ENCODE measurements at regions of chr10 and their contacts with region 1.

Region 1: DNA sequence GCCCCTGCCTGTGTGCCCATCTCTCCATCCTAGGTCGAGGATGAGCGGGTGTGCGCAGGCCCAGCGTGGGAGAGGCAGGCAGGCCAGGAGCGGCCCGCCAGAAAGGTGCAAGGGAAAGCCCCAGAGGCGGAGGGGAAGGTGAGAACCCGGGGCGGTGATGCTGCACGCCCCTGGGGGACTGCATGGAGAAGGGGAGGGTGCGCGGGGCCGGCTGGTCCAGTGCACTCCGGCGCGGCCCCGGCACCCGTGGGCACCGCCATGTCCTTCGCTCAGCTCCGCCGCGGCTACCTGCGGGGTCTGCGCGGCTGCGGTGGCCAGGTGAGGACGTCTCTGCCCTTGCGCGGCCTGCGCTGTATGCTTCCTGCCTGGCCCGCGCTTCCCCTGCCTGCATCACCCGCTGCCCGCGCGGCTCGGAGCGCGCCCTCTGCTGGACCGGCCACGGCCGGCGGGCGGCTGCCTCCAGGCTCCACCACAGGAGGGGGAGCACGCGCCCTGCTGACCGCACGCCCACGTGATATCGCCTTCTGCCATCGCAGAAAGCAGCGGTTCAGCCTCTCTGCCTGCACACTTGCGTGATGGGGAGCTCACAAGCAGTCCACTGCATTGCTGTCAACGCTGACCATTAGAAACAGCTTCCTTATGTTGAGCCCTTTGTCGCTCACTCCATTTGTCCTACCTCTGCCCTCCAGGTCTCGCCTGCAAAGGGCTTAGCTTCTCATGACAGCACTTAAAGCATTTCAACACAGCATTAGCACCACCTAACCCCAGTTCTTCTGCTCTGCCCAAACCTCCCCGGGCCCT is 73.9 kb downstream of the CXCL12 start:
- DNase-seq: peak; percentile 80 to 88
- ATAC-seq: peak; percentile 73 to 83
- H3K4me3 ChIP-seq: peak overlapping the region; percentile 27 to 62 (median 36)
- H3K27ac ChIP-seq: peak overlapping the region in 3 of 4 donors; percentile 21 to 39 (median 35)
- H3K4me1 ChIP-seq: peaks cover 0 to 8% of the 10 kb centered on the region in 2 donors
- H3K27me3 ChIP-seq: no peaks in the 10 kb centered on the region
- CTCF ChIP-seq: peak; percentile 85 to 97 (median 93)
- POLR2A ChIP-seq: no peak

Region 2: DNA sequence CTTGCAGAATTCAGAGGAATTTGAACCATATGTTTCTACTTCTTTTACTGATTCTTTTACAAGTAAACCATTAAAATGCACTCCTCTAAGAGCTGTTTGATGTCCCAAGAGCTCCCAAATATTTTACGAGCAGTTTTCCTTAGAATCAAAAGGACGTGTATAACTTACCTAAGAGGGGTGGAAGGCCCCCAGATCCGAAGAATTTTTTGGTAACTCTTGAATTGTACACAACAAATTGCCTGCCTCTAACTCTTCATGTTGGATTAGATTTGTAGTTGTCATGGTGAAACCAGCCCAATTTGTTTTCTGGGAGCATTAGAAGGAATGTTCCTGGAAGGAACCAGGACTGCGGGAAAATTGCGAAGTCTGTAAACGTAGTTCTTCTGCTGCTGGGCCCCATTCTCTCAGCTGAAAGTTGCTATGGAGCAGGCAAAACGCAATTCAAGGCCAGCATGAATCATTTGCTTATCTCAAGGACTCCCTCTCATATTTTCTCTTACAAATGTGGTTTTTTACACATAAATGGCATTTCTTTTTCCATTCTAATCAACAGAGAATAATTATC is 475.4 kb after region 1 on chr10:
- in situ Hi-C with region 1: no loop called
- intact Hi-C with region 1: no loop called
- DNase-seq: no peak
- ATAC-seq: no peak
- H3K4me3 ChIP-seq: no peak overlapping the region
- H3K27ac ChIP-seq: no peak overlapping the region
- H3K4me1 ChIP-seq: no peaks in the 10 kb centered on the region
- H3K27me3 ChIP-seq: no peaks in the 10 kb centered on the region
- CTCF ChIP-seq: no peak
- POLR2A ChIP-seq: no peak

Region 3: DNA sequence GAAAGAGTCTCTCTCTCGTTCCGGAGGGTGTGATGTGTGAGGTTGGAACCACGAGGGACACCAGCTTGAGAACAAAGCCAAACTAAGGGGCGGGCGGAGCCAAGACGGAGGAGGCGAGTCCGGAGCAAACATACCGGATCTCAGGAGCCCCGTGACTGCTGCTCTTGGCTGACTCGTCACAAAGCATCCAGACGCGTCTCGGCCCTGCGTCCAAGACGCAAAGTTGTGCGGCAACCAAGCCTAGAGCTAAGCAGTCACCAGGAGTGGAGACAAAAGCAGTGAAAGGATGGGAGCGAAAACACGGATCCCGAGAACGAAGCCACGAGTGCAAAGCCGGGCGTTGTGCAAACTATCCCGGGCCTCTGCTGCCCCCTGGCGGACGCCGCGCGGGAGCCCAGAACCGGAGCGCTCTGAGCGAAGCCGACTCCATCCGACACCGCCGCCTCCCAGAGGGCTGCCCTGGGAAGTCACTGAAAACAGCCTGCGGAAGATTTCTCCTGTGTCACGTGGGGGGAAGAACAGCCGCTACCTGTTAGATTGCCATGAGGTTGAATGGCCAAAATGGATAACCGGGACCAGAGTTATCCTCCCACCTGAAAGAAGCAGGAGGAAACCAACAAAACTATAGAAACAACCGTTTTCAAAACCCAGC is 553.8 kb after region 1 on chr10:
- in situ Hi-C with region 1: loop called in 1 of 4 experiments (anchors 25 kb)
- intact Hi-C with region 1: loop called (anchors 10 kb)
- DNase-seq: peak; percentile 71 to 78
- ATAC-seq: peak; percentile 91 to 94
- H3K4me3 ChIP-seq: peak overlapping the region; percentile 51 to 64 (median 60)
- H3K27ac ChIP-seq: peak overlapping the region; percentile 36 to 65 (median 56)
- H3K4me1 ChIP-seq: peaks cover 0 to 9% of the 10 kb centered on the region in 2 donors
- H3K27me3 ChIP-seq: peaks cover 0 to 6% (median 0%) of the 10 kb centered on the region in 3 donors
- CTCF ChIP-seq: peak; percentile 86 to 98 (median 95)
- POLR2A ChIP-seq: no peak

Measured in gastrocnemius medialis (tissue), 4 donors.